Breast epithelium (tissue), 4 donors: ENCODE measurements at regions of chr9 and their contacts with region 1.

Region 1: DNA sequence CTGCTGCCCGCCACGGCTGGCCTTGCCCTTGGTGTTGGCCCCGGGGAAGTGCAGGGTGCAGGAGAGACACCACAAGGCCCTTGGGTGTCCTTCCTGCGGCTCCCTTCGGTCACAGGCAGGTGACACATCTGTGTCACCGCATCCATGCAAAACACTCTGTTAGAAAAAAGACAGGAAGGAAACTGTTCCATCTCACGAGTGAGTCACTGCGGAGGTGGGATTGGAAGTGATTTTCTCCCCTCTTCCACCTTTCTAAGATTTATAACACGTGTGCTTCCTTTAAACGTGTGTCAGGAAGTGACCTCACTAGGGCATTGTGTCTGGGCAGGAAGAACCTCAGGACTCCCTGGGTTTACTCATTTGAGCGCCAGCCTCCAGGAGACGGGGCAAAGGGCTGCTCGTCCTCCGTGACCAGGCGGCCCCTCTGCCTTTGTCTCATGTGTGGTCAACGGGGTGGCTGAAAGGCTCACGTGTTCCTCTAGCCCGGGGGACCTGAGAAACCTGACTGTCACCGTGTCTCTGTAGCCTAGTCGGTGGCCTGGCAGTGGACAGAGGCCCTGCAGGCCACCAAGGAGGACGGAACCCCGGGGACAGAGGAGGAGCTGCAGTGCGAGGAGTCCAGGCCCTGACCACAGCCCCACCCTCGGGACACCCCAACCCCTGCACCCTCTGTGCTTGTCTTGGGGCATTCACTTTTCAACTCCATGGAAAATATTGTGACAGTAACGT is 4.9 kb upstream of the LCN1 start:
- DNase-seq: no peak
- H3K4me3 ChIP-seq: no peak overlapping the region
- H3K27ac ChIP-seq: no peak overlapping the region
- H3K4me1 ChIP-seq: no peaks in the 10 kb centered on the region
- H3K27me3 ChIP-seq: peaks cover 0 to 8% of the 10 kb centered on the region in 2 donors
- CTCF ChIP-seq: no peak
- POLR2A ChIP-seq: no peak

Region 2: DNA sequence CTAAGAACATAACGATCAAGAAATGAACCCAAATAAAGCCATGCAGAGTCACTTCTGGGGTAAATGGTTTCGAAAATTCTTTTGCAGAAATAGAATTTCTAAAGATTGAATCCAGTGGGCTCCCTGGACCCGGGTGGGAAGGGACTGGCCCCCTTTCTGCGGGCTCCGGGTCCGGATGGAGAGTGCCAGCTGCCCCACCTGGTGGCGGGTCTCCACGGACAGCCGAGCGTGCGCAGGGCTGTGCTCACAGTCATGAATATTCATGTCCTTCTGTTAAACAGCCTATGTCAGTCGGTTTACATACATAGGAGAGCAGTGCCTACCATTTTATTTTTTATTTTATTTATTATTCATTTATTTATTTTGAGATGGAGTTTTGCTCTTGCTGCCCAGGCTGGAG is 41.4 kb before region 1 on chr9:
- intact Hi-C with region 1: no loop called
- DNase-seq: no peak
- H3K4me3 ChIP-seq: no peak overlapping the region
- H3K27ac ChIP-seq: no peak overlapping the region
- H3K4me1 ChIP-seq: no peaks in the 10 kb centered on the region
- H3K27me3 ChIP-seq: no peaks in the 10 kb centered on the region
- CTCF ChIP-seq: no peak
- POLR2A ChIP-seq: no peak

Region 3: DNA sequence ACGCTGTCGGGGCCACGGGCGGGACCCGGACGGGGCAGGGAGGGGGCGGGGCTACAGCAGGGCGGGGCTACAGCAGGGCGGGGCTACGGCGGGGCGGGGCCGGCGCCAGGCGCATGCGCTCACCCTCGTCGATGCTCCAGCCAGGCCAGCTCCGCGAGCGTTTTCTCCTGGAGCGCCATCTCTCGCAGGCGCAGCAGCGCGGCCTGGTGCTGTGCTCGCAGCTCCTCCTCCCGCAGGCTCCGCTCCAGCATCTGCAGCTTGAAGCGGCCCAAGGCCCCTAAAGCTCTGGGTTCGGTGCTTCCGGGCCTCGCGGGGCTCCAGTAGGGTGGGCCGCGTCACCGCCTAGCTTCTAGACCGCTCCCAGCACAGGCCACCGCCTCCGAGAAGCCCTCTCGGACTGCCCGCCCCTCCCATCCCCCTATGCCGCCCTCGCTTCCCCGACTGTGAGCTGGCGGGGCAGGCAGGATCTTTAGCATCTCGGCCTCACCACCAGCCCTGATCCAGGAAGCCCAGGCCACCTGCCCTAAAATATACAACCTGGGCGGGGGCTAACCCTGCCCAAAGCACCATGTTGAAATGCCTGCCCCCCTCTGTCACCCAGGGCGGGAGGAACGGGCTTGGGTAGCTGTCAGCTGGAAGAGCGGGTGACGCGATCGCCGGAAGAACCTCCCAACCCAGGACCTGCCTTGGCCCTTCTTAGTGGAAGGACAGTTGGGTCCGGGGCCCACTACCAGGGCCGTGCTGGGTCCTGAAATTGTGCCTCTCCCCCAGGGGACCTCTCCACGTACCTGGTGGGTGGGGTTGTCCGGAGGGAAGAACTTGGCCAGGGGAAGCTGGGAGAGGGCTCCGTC is 751.2 kb after region 1 on chr9:
- intact Hi-C with region 1: loop called (anchors 5 kb)
- DNase-seq: peak; percentile 44 to 65
- H3K4me3 ChIP-seq: peak overlapping the region; percentile 35 to 65 (median 49)
- H3K27ac ChIP-seq: peak overlapping the region in 1 of 2 donors; percentile 9
- H3K4me1 ChIP-seq: no peaks in the 10 kb centered on the region
- H3K27me3 ChIP-seq: no peaks in the 10 kb centered on the region
- CTCF ChIP-seq: no peak
- POLR2A ChIP-seq: no peak

Region 4: GRCh38 chr9:136481558-136481957 is 965.3 kb after region 1 on chr9:
- intact Hi-C with region 1: no loop called
- DNase-seq: no peak
- H3K4me3 ChIP-seq: peak overlapping the region; percentile 73 to 98 (median 90)
- H3K27ac ChIP-seq: peak overlapping the region in 1 of 2 donors; percentile 99
- H3K4me1 ChIP-seq: peaks cover 12 to 18% of the 10 kb centered on the region in 2 donors
- H3K27me3 ChIP-seq: no peaks in the 10 kb centered on the region
- CTCF ChIP-seq: no peak
- POLR2A ChIP-seq: no peak